ENCODE measurements at regions of chr3 and their contacts with region 1.

Region 1: GRCh38 chr3:184145111-184145524 is 10.0 kb downstream of the EIF2B5 start:
- DNase-seq: peak; percentile 61
- ATAC-seq: peak; percentile 86
- H3K4me3 ChIP-seq: no peak overlapping the region
- H3K27ac ChIP-seq: no peak overlapping the region; the same call in 1 of the 2 replicates
- H3K4me1 ChIP-seq: 0 out of 2 replicates have a peak, but pooled peaks cover 2% of the 10 kb centered on the region
- H3K27me3 ChIP-seq: no peaks in the 10 kb centered on the region
- CTCF ChIP-seq: peak; percentile 53
- POLR2A ChIP-seq: no peak
- RAD21 ChIP-seq: peak; percentile 63

Region 2: DNA sequence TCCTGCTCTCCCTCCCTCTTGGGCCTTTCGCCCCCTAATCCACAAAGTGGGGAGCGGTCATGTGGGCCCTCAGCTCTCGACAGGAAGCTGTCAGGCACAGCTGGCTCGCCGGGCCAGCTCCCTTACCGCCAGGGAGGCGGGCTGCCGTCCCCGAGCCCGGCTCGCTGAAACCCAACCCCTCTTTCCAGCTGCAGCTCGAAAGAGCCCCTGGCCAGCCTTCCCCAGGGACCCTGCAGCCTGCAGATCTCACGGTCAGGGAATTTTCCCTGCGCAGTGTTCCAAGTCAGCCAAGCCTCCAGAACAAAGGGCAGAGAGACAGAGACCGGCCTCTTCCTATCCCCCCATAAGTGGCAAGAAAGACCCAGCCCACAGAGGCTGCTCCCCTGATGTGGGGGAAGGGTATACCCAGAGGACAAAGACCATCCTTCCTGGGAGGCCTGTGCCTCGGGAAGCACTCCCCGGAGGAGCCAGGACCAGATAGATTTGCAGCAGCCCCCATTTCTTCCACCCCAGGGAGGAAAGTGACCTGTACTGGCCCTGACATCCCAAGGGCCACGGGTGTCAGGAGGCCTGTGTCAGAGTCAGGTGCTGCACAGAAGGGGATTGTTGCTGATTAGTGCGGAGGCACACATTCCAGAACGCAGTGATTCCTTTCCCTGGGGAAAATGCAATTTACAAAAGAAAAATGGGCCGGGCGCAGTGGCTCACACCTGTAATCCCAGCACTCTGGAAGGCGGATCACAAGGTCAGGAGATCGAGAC is 534.1 kb after region 1 on chr3:
- CTCF ChIA-PET with region 1: no interaction called
- POLR2A ChIA-PET with region 1: interaction called, 14 read pairs
- dilution Hi-C with region 1: no loop called
- in situ Hi-C with region 1: no loop called
- intact Hi-C with region 1: no loop called
- DNase-seq: no peak
- ATAC-seq: peak; percentile 78
- H3K4me3 ChIP-seq: no peak overlapping the region
- H3K27ac ChIP-seq: no peak overlapping the region; the same call in 1 of the 2 replicates
- H3K4me1 ChIP-seq: peaks cover 4% of the 10 kb centered on the region; the same call in 1 of the 2 replicates
- H3K27me3 ChIP-seq: peaks cover 40% of the 10 kb centered on the region
- CTCF ChIP-seq: no peak
- POLR2A ChIP-seq: no peak
- RAD21 ChIP-seq: no peak

Measured in IMR-90 (cell line).